ENCODE measurements at regions of chr6 and their contacts with region 1.

Region 1: GRCh38 chr6:122381497-122382265 is 17.8 kb upstream of the HSF2 start:
- DNase-seq: peak; percentile 27 to 84 (median 62)
- ATAC-seq: peak; percentile 100
- H3K4me3 ChIP-seq: no peak overlapping the region
- H3K4me3 Mint-ChIP-seq: no peak overlapping the region
- H3K27ac ChIP-seq: no peak overlapping the region
- H3K27ac Mint-ChIP-seq: no peak overlapping the region
- H3K4me1 ChIP-seq: no peaks in the 10 kb centered on the region
- H3K4me1 Mint-ChIP-seq: peaks cover 6% of the 10 kb centered on the region
- H3K27me3 ChIP-seq: no peaks in the 10 kb centered on the region
- H3K27me3 Mint-ChIP-seq: no peaks in the 10 kb centered on the region
- CTCF ChIP-seq: peak; percentile 81

Region 2: DNA sequence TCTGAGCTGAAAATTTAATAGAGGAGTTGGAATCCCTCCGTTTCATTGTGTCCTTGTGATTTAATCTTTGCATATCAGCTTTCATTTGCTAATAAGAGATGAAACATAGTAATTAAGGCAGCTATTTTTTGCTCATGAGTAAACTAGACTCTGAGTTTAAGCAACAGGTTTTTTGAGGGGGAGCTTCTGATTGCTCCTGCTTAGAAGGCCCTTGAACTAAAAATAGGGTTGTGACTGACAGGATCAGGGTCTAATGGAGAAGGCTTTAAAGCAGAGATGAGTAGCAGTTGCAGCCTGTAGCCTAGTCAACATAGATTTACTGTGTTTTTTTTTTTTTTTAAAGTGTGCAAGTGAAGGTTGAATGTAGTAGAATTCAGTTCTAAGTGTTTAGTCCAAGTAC is 35.1 kb after region 1 on chr6:
- CTCF ChIA-PET with region 1: interaction called, 4 read pairs
- POLR2A ChIA-PET with region 1: no interaction called
- intact Hi-C with region 1: loop called (anchors 5 kb)
- DNase-seq: no peak
- ATAC-seq: no peak
- H3K4me3 ChIP-seq: no peak overlapping the region
- H3K4me3 Mint-ChIP-seq: no peak overlapping the region
- H3K27ac ChIP-seq: no peak overlapping the region
- H3K27ac Mint-ChIP-seq: no peak overlapping the region
- H3K4me1 ChIP-seq: peaks cover 3% of the 10 kb centered on the region
- H3K4me1 Mint-ChIP-seq: peaks cover 12% of the 10 kb centered on the region
- H3K27me3 ChIP-seq: no peaks in the 10 kb centered on the region
- H3K27me3 Mint-ChIP-seq: no peaks in the 10 kb centered on the region
- CTCF ChIP-seq: no peak

Region 3: GRCh38 chr6:122449069-122449468 is 67.4 kb after region 1 on chr6:
- CTCF ChIA-PET with region 1: interaction called, 3 read pairs
- POLR2A ChIA-PET with region 1: no interaction called
- intact Hi-C with region 1: loop called in 1 of 2 experiments (anchors 5 kb)
- DNase-seq: no peak
- ATAC-seq: no peak
- H3K4me3 ChIP-seq: no peak overlapping the region
- H3K4me3 Mint-ChIP-seq: no peak overlapping the region
- H3K27ac ChIP-seq: no peak overlapping the region
- H3K27ac Mint-ChIP-seq: peak overlapping the region; percentile 45
- H3K4me1 ChIP-seq: no peaks in the 10 kb centered on the region
- H3K4me1 Mint-ChIP-seq: peaks cover 30% of the 10 kb centered on the region
- H3K27me3 ChIP-seq: no peaks in the 10 kb centered on the region
- H3K27me3 Mint-ChIP-seq: no peaks in the 10 kb centered on the region
- CTCF ChIP-seq: no peak

Region 4: GRCh38 chr6:122683989-122684651 is 302.4 kb after region 1 on chr6:
- CTCF ChIA-PET with region 1: no interaction called
- POLR2A ChIA-PET with region 1: no interaction called
- intact Hi-C with region 1: no loop called
- DNase-seq: no peak
- ATAC-seq: no peak
- H3K4me3 ChIP-seq: no peak overlapping the region
- H3K4me3 Mint-ChIP-seq: no peak overlapping the region
- H3K27ac ChIP-seq: no peak overlapping the region
- H3K27ac Mint-ChIP-seq: no peak overlapping the region
- H3K4me1 ChIP-seq: no peaks in the 10 kb centered on the region
- H3K4me1 Mint-ChIP-seq: no peaks in the 10 kb centered on the region
- H3K27me3 ChIP-seq: no peaks in the 10 kb centered on the region
- H3K27me3 Mint-ChIP-seq: no peaks in the 10 kb centered on the region
- CTCF ChIP-seq: no peak